Thyroid gland (tissue), 4 donors: ENCODE measurements at regions of chr15 and their contacts with region 1.

Region 1: GRCh38 chr15:32994810-32995424 is 199.6 kb downstream of the FMN1 start:
- DNase-seq: no peak
- H3K4me3 ChIP-seq: no peak overlapping the region
- H3K27ac ChIP-seq: no peak overlapping the region
- H3K4me1 ChIP-seq: no peaks in the 10 kb centered on the region
- H3K27me3 ChIP-seq: no peaks in the 10 kb centered on the region
- CTCF ChIP-seq: peak in 4 of 6 experiments; percentile 23 to 68 (median 56)
- POLR2A ChIP-seq: no peak

Region 2: GRCh38 chr15:32659340-32660155 is 335.4 kb before region 1 on chr15:
- intact Hi-C with region 1: loop called (anchors 5 kb)
- DNase-seq: peak; percentile 48 to 58
- H3K4me3 ChIP-seq: no peak overlapping the region
- H3K27ac ChIP-seq: peak overlapping the region; percentile 20 to 46 (median 41)
- H3K4me1 ChIP-seq: peaks cover 19 to 22% of the 10 kb centered on the region in 2 donors
- H3K27me3 ChIP-seq: no peaks in the 10 kb centered on the region
- CTCF ChIP-seq: peak in 3 of 6 experiments; percentile 8 to 29 (median 28)
- POLR2A ChIP-seq: no peak

Region 3: DNA sequence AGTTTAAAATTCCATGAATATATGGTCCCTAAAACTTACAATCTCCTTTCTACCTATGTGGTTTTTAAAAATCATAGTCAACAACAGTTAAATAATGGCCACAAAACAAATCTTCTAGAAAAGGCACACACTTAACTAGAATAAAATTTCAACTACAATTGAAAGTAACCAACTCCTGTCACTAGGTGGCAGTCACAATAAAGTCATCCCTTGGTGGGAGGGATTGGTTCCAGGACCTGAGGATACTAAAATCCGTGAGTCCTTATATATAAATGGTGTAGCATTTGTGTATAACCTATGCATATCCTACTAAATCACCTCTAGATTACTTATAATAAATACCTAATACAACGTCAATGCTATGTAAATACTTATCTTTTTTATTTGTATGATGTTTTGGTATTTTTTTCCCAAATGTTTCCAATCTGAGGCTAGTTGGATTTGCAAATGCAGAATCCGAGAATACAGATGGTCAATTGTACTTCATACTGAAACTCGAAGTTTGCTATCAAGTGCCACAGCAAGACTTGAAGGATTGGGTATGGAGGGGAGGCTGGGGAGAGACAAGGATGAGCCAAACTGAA is 27.0 kb after region 1 on chr15:
- intact Hi-C with region 1: no loop called
- DNase-seq: peak in 1 of 2 donors; percentile 23
- H3K4me3 ChIP-seq: no peak overlapping the region
- H3K27ac ChIP-seq: peak overlapping the region; percentile 79 to 90 (median 84)
- H3K4me1 ChIP-seq: peaks cover 14 to 26% of the 10 kb centered on the region in 2 donors
- H3K27me3 ChIP-seq: no peaks in the 10 kb centered on the region
- CTCF ChIP-seq: peak in 5 of 6 experiments; percentile 20 to 87 (median 72)
- POLR2A ChIP-seq: no peak